GM12878 (cell line): ENCODE measurements at regions of chr5 and their contacts with region 1.

Region 1: GRCh38 chr5:157225469-157226422 is 40.2 kb upstream of the CYFIP2 start:
- DNase-seq: no peak
- ATAC-seq: peak; percentile 61
- H3K4me3 ChIP-seq: no peak overlapping the region
- H3K27ac ChIP-seq: no peak overlapping the region
- H3K4me1 ChIP-seq: peaks cover 8% of the 10 kb centered on the region
- H3K27me3 ChIP-seq: no peaks in the 10 kb centered on the region
- CTCF ChIP-seq: no peak
- EP300 ChIP-seq: no peak
- POLR2A ChIP-seq: no peak
- RAD21 ChIP-seq: no peak

Region 2: GRCh38 chr5:157167214-157167621 is 58.5 kb before region 1 on chr5:
- CTCF ChIA-PET with region 1: interaction called, 3 read pairs
- POLR2A ChIA-PET with region 1: interaction called, 3 read pairs
- RAD21 ChIA-PET with region 1: interaction called, 8 read pairs
- SMC1A ChIA-PET with region 1: interaction called, 10 read pairs
- in situ Hi-C with region 1: no loop called
- intact Hi-C with region 1: no loop called
- DNase-seq: peak; percentile 16
- ATAC-seq: peak; percentile 72
- H3K4me3 ChIP-seq: no peak overlapping the region
- H3K27ac ChIP-seq: no peak overlapping the region
- H3K4me1 ChIP-seq: peaks cover 10% of the 10 kb centered on the region
- H3K27me3 ChIP-seq: no peaks in the 10 kb centered on the region; a peak in 1 of 4 replicates
- CTCF ChIP-seq: no peak
- EP300 ChIP-seq: no peak
- POLR2A ChIP-seq: no peak
- RAD21 ChIP-seq: no peak